Posterior cingulate gyrus (tissue), 11 donors: ENCODE measurements at regions of chr10 and their contacts with region 1.

Region 1: DNA sequence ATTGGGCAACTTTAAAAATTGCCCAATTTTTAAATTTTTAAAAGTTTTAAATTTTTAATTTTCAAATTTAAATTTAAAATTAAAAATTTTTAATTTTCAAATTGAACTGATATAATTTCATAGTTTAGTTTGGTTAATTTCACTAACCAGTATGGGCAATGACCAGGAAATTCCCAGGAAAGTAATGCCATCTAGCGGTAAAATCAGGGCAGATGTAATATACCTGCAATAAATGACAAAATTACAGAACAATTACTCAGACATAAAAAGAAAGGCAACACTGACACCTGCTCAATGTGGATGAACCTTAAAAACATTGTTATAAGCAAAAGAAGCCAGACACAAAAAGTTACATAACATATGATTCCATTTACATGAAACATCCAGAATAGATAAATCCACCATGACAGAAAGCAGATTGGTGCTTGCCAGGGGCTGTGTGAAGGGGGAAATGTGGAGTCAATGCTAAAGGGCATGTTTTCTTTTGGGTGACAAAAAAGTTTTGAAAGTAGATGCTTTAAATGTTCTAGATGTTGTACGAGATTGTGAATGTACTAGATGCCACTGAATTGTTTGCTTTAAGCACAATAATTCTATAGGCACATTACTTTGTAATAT is 28.6 kb upstream of the SLC16A12 start:
- DNase-seq: peak in 1 of 10 donors; percentile 19

Region 2: DNA sequence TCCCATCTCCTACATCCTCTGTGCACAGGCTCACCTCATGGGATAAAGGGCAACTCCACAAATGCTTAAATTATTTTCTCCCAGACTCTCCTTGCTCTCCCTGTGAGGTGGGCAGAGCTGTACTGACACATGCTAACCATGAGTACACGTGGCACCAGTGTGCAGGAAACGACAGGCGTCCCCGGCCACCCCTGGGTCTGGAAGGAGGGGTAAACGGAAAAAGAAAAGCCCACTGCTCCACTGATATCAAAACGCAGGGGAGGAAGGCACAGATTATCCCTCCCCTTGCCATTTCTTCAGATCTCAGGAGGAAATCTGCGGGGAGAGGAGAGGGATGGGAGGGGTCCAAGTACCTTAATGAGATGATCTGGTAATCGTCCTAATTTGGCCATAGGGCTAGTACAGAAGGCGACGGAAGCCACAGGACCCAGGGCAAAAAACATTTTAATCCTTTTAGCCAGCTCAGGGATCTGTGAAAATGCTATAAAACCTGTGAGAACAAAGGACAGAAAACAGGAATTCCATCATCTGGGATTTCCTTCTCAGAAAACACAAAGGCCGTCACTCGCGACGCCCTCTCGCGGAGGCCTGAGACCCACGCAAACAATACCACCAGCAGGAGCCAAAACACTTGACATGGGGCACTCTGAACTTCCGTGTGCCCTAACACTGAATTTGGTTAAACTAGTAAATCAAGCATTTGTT is 339.1 kb before region 1 on chr10:
- intact Hi-C with region 1: loop called (anchors 5 kb)
- DNase-seq: peak in 5 of 10 donors; percentile 46 to 93 (median 66)

Region 3: DNA sequence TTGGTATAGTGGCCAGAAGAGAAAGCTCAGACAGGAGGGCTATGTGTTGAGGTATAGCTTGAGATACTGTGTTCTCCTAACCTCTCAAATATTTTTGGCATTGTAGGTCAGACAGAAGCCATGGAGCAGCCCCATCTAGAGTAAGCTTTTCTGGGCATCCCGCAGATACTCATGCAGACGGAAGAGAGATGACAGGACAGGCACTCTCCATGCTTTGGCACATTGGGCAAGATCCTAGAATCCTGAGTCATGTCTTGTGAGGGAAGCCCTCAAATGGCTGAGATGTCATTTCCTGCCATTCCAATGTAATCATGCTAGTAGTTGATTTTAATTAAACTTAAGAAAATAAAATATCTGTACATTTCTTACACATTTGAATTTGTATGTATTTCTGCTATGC is 120.6 kb after region 1 on chr10:
- intact Hi-C with region 1: no loop called
- DNase-seq: no peak

Region 4: DNA sequence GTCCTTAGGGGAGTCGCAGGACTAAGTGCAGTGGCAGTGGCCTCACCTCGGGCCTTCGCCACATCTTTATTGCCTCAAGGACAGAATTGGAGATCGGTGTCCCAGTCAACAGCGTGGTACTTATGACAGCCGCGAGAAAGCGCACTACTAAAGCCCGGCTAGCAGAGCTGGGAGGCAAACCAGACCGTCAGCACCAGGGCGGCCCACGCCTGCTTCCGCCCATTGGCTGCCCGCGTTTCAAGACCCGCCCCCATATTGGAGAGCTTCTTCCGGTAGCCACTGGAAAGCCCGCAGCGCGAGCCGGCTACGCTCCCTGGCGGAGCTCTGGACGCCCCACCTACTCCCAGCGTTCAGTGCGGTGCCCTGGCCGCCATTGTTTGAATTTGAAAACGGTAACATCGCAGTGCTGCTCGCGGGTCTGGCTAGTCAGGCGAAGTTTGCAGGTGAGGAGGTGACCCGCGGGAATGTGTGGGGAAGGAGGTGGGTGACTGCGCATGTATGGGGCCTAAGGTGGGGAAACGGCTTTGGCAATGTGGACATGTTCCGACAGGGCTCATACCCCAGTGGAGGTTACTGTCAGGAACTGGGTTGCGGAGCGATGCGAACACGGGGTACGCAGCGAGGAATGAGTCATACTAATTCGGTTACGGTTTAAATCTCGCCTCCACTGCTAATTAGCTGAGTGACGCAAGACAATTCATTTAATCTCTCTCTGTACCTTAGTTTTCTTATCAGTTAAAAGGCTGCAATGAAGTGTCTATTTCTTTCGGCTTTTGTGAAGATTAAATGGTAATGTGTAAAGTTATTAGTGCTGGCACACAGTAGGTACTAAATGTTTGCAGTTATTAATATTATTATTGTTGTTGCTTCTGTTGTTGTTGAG is 137.5 kb after region 1 on chr10 and contains the start of gene KIF20B:
- intact Hi-C with region 1: no loop called
- DNase-seq: peak; percentile 94 to 99 (median 96)